Common myeloid progenitor, CD34-positive (primary cell): ENCODE measurements at regions of chr9 and their contacts with region 1.

Region 1: DNA sequence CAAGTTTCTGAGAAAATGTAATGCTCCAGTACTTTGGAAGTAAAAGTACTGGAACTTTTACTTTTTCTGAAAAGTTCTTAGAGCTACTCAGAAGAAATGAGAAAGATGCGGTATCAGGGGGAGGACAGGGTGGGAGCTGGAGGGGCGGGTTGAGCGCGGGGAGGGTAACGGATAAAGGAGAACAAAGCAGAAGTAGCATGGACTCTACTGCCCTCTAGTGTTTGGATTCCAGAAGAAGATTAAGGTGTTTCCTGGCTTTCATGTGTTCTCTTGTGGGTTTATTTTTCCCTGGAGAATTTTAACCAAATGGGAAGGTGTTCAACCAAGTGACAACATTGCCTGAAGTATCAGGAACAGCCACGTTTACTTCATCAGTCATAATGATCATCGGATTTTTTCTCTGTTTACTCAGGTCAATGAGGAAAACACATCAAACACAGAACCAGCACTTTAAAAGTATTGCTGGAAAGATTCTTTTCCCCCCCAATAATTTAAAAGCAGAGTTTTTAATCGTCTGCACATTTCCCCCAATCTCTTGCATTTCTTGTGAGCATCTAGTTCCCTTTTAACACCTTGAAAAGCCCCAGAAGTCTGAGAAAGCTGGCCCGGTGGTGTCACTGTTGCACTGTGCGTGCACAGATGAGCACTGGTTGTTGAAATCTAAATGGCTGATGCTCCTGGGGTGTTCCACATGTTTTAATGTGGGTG is 190.6 kb downstream of the MPDZ start:
- DNase-seq: peak; percentile 34 to 62 (median 48)
- H3K4me3 ChIP-seq: no peak overlapping the region
- H3K27ac ChIP-seq: no peak overlapping the region
- H3K4me1 ChIP-seq: no peaks in the 10 kb centered on the region
- H3K27me3 ChIP-seq: peaks cover 0 to 1% (median 0%) of the 10 kb centered on the region in 5 experiments

Region 2: GRCh38 chr9:12719431-12719830 is 369.4 kb before region 1 on chr9:
- CTCF ChIA-PET with region 1: interaction called, 10 read pairs
- POLR2A ChIA-PET with region 1: no interaction called
- DNase-seq: peak; percentile 29 to 51 (median 50)
- H3K4me3 ChIP-seq: no peak overlapping the region
- H3K27ac ChIP-seq: no peak overlapping the region
- H3K4me1 ChIP-seq: peaks cover 0 to 3% (median 0%) of the 10 kb centered on the region in 4 experiments
- H3K27me3 ChIP-seq: no peaks in the 10 kb centered on the region

Region 3: GRCh38 chr9:13100914-13101572 is 12.2 kb after region 1 on chr9:
- CTCF ChIA-PET with region 1: interaction called, 10 read pairs
- POLR2A ChIA-PET with region 1: no interaction called
- DNase-seq: no peak
- H3K4me3 ChIP-seq: no peak overlapping the region
- H3K27ac ChIP-seq: no peak overlapping the region
- H3K4me1 ChIP-seq: no peaks in the 10 kb centered on the region
- H3K27me3 ChIP-seq: no peaks in the 10 kb centered on the region